ENCODE measurements at regions of chr1 and their contacts with region 1.

Region 1: DNA sequence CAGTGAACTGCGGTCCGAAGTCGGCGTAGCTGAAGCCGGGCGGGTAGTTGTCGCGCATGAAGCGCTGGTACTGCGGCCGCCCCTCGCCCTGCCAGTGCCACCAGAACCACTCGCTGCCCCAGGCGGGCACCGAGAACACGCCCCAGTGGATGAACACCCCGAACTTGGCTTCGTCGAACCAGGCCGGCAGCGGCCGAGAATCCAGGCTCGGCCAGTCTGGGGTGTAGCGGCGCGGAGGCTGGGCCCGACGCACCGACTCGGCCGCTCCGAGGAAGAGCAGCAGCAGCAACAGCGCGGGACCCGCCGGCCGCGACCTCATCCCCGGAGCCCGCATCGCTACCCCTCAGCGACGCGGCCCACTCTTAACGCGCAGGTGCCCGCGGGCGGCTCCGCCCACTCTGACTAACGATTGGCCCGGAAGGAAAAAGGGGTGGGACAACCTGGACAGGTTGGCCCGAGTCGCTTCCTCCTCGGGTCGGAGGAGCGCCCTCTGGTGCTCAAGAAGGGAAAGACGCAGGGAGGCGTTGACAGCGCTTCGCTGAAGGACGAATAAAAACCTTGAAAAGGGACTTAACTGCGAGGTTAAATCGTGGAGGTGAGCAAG is at the start of gene FUCA1:
- DNase-seq: peak; percentile 90 to 99 (median 94)

Region 2: GRCh38 chr1:23772049-23772853 is 95.8 kb before region 1 on chr1:
- intact Hi-C with region 1: loop called (anchors 2 kb)
- DNase-seq: peak; percentile 78 to 98 (median 92)

Region 3: DNA sequence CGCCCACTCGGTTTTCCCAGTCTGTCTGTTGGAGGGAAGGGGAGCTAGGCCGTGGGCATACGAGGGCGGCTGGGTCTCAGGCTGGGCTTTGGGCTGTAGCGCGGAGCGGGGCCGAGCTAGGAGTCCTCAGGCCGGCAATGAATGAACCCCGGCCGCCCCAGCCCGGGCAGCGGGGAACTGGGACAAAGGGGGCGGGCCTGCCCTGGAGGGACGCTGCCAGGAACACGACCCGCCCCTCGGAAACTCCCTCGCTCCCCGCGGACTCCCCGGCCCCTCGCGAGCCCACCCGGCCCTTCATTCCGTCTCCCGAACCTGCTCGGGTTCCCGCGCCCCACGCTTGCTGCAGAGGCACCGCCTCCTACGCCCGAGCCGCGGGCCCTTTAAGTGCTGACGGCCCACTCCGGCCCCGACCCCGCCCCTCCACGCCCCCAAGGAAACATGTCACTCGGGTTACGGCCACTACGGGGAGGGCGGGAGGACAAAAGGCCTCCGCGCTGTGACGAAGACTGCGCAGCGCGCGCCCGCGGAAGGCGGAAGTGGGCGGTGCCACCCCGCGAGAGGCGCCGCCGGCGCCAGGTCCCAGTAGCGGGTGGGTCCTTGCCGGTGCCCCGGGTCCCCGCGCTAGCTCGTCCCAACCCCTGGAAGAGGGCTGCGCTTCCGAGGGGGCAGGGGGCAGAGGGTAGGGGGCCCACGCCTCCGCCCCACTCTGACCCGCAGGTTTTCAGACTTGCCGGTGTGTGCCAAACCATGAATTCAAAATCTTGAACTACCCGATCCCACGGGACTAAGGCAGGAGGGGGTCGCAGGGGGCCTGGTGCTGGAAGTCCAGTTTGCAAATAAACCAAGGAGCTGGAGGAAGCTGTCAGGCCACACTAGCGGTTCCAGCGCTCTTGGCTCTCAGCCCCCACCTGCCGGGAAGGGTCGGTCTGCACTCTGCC is 67.4 kb before region 1 on chr1 and contains the start of gene GALE:
- intact Hi-C with region 1: loop called (anchors 5 kb)
- DNase-seq: peak; percentile 93 to 99 (median 95)

Region 4: GRCh38 chr1:23825076-23825761 is 42.8 kb before region 1 on chr1 and contains the start of gene HMGCL:
- intact Hi-C with region 1: loop called (anchors 5 kb)
- DNase-seq: peak; percentile 87 to 98 (median 92)